ENCODE measurements at regions of chr20 and their contacts with region 1.

Region 1: DNA sequence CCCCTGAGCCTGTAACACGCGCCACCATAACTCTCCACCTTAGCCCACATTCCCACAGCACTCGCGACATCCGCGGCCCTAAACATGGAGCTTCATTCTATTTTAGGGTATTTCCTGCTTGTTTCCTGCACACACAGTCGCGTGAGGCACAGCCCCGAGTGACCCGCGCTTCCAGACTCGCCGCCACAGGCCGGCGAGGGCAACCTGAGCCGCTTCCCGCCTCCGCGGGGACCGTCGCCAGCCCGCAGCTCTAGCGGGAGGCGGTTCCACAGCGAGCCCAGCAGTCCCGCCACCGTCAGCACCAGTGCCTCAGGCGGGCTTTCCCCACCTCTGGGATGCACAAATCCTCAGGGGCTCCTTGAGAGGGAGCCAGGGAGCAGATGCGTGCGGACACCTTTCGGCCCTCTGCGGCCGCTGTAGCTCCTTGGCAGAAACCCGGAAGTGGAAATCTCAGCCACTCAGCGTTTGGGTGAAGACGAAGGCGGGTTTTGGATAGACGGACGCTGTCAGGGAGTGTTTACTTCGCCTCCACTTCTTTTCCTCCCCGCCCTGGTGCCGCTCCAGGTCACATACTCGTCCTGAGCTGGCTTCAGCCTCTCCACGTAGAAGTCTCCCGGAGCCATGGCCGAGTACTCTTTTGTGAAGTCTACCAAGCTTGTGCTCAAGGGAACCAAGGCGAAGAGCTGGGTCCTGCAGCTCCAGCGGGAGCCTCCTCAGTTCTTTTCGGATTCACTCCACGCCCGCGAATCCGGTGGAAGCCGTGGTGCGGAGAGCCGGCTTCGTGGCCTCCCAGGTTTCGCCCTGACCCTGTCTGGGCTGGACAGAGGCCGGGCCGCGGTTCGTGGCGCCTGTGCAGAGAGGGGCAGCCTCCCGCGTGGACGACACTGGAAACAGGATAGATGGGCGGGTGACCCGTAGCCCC is 2177.4 kb upstream of the DEFB115 start:
- DNase-seq: peak in 4 of 9 experiments; percentile 5 to 52 (median 30)
- ATAC-seq: peak; percentile 31
- H3K4me3 ChIP-seq: peak overlapping the region in 1 of 2 experiments; percentile 37
- H3K4me3 Mint-ChIP-seq: peak overlapping the region; percentile 73
- H3K27ac ChIP-seq: no peak overlapping the region
- H3K27ac Mint-ChIP-seq: no peak overlapping the region
- H3K4me1 ChIP-seq: no peaks in the 10 kb centered on the region
- H3K4me1 Mint-ChIP-seq: no peaks in the 10 kb centered on the region
- H3K27me3 ChIP-seq: no peaks in the 10 kb centered on the region
- H3K27me3 Mint-ChIP-seq: no peaks in the 10 kb centered on the region
- CTCF ChIP-seq: no peak

Region 2: DNA sequence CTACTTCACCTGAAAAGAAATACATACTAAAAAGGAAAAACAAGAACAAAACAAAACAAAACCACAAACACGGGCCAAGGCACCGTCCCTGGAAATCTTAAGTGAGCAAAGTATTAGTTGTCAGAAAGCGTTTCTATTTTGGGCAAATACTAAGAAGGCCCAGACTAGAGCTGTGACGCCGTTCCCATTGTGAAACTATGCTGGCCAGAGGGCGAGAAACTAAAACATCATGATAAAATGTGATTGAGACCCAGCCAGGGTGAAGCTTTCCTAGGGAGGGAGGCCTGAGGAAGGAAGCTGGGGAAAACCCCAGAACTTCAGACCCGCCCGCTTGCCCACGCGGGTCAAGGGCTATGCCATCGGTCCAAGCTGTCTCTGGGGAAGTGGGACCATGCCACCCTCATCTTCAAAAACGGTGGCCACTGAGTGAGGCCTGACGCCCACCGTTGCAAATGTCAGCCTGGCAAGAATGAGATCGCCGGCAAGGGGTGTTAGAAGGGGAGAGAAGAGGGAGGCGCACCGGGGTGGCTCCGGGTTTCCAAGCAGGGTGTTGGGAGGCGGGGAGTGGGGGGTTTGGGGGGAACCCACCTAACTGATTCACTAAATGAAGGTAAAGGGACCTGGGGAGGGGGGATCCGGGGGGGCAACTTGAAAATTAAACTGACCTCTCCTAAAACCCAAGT is 226.5 kb after region 1 on chr20:
- CTCF ChIA-PET with region 1: no interaction called
- POLR2A ChIA-PET with region 1: no interaction called
- intact Hi-C with region 1: no loop called
- DNase-seq: peak in 2 of 9 experiments; percentile 6 to 51
- ATAC-seq: no peak
- H3K4me3 ChIP-seq: peak overlapping the region in 1 of 2 experiments; percentile 35
- H3K4me3 Mint-ChIP-seq: no peak overlapping the region
- H3K27ac ChIP-seq: peak overlapping the region in 1 of 2 experiments; percentile 4
- H3K27ac Mint-ChIP-seq: no peak overlapping the region
- H3K4me1 ChIP-seq: no peaks in the 10 kb centered on the region
- H3K4me1 Mint-ChIP-seq: no peaks in the 10 kb centered on the region
- H3K27me3 ChIP-seq: no peaks in the 10 kb centered on the region
- H3K27me3 Mint-ChIP-seq: no peaks in the 10 kb centered on the region
- CTCF ChIP-seq: no peak

Region 3: GRCh38 chr20:29318871-29319461 is 238.9 kb after region 1 on chr20:
- CTCF ChIA-PET with region 1: no interaction called
- POLR2A ChIA-PET with region 1: no interaction called
- intact Hi-C with region 1: no loop called
- DNase-seq: peak in 1 of 9 experiments; percentile 10
- ATAC-seq: no peak
- H3K4me3 ChIP-seq: no peak overlapping the region
- H3K4me3 Mint-ChIP-seq: no peak overlapping the region
- H3K27ac ChIP-seq: no peak overlapping the region
- H3K27ac Mint-ChIP-seq: no peak overlapping the region
- H3K4me1 ChIP-seq: no peaks in the 10 kb centered on the region
- H3K4me1 Mint-ChIP-seq: no peaks in the 10 kb centered on the region
- H3K27me3 ChIP-seq: no peaks in the 10 kb centered on the region
- H3K27me3 Mint-ChIP-seq: no peaks in the 10 kb centered on the region
- CTCF ChIP-seq: no peak

Region 4: DNA sequence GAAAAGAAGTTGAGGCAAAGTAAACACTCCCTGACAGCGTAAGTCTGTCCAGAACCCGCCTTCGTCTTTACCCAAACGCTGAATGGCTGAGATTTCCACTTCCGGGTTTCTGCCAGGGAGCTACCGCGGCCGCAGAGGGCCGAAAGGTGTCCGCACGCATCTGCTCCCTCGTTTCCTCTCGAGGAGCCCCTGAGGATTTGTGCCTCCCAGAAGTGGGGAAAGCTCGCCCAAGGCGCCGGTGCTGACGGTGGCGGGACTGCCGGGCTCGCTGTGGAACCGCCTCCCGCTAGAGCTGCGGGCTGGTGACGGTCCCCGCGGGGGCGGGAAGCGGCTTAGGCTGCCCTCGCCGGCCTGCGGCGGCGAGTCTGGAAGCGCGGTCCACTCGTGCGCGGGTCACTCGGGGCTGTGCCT is 417.2 kb after region 1 on chr20:
- CTCF ChIA-PET with region 1: no interaction called
- POLR2A ChIA-PET with region 1: no interaction called
- intact Hi-C with region 1: loop called in 1 of 2 experiments (anchors 10 kb)
- DNase-seq: peak in 5 of 9 experiments; percentile 9 to 50 (median 36)
- ATAC-seq: no peak
- H3K4me3 ChIP-seq: peak overlapping the region in 1 of 2 experiments; percentile 43
- H3K4me3 Mint-ChIP-seq: no peak overlapping the region
- H3K27ac ChIP-seq: no peak overlapping the region
- H3K27ac Mint-ChIP-seq: no peak overlapping the region
- H3K4me1 ChIP-seq: no peaks in the 10 kb centered on the region
- H3K4me1 Mint-ChIP-seq: no peaks in the 10 kb centered on the region
- H3K27me3 ChIP-seq: no peaks in the 10 kb centered on the region
- H3K27me3 Mint-ChIP-seq: no peaks in the 10 kb centered on the region
- CTCF ChIP-seq: no peak

Measured in CD8-positive, alpha-beta T cell (primary cell).